ENCODE measurements at regions of chr12 and their contacts with region 1.

Region 1: DNA sequence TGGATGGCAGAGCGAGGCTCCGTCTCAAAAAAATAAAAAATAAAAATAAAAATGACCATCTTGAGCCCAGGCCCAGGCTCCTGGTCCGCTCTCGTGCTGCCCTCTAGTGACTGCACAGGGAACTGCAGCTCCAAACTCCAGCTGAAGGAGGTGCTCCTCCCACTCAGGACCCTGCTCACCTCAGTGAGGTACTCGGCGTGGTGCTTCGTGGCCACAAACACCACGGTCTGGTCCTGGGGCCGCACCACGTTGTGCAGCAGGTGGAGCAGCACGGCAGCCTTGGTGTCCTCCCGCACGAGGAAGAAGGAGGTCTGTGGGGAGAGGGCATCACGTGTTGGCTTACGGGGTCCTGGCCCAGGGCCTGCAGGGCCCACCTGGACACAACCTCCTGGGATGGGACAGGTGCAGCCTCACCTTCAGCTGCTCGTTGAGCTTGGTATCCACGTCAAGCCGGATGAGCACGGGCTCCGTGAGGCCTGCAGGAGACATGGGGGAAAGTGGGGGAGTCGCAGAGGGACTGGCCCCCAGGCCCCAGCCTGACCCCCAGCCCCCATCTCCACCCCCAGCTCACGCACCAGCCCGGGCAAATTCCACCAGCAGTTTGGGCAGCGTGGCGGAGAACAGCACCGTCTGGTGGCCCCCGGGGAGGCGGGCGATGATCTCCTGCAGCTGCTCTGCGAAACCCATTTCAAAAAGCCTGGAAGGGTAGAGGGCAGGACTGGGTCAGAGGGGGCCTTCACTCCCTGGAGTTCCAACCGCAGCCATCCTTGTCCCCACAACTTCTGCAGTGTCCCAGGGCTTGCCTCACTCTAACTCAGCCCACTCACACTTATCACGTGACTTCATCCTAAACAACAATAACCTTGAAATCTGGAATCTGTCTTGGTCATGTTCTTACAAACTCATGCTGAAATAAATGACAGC is 10.6 kb downstream of the DDX54 start:
- DNase-seq: peak in 1 of 2 experiments; percentile 88
- H3K4me3 ChIP-seq: no peak overlapping the region
- H3K4me1 ChIP-seq: no peaks in the 10 kb centered on the region
- H3K27me3 ChIP-seq: no peaks in the 10 kb centered on the region

Region 2: DNA sequence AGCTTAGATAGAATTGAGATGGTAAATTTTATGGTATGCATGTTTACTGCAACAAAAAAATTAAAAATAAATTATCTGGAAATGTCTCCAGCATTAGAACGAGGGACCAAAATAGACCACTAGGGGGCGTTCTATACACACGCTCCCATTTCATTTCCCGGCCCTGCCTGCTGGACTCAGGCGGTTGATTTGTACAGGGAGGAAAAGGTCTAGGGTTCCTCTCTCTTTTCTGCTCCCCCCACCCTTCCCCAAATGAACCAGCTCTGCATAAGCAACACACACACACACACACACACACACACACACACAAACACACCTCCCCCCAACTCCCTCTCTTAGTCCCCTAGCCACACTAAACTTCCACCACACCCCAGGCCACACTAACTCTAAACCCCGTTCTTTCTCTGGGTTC is 126.0 kb before region 1 on chr12:
- in situ Hi-C with region 1: loop called (anchors 5 kb)
- DNase-seq: peak; percentile 48 to 78
- H3K4me3 ChIP-seq: no peak overlapping the region
- H3K4me1 ChIP-seq: no peaks in the 10 kb centered on the region
- H3K27me3 ChIP-seq: peaks cover 10% of the 10 kb centered on the region